ENCODE measurements at regions of chr2 and their contacts with region 1.

Region 1: GRCh38 chr2:9613291-9613690 is 17.5 kb downstream of the YWHAQ start:
- DNase-seq: no peak
- ATAC-seq: no peak
- H3K4me3 Mint-ChIP-seq: no peak overlapping the region
- H3K27ac Mint-ChIP-seq: no peak overlapping the region
- H3K4me1 Mint-ChIP-seq: peaks cover 86% of the 10 kb centered on the region
- H3K27me3 Mint-ChIP-seq: no peaks in the 10 kb centered on the region

Region 2: DNA sequence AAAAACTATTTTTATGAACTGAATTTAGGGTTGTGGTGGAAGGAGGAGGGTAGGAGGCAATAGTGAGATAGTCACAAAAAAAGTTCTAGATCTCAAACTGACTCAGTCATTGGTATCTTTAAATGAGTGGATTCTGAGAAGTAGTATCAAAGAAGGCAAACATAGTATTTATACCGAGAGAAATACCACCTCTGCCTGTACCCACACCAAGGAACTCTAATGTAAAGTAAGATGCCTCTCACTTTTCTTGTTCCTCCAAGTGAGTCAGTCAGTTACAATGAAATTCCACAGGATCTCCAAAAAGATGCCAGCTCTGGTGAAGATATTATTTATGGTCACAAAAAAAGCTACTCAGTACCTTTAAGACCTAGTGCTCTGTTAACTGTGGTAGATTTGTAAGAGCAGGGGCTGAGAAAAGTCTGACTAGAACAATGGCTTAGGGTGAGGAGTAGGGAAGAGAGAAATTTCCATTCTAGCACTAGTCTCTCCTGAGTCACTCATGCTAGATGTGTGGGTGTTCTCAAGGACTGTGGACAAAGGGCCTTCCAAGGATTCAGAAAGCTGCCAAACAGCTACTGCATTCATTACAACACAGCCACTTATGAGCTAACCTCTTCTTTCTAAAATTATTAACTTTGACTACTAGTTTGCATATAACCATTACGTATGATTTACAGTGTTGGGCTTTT is 18.8 kb before region 1 on chr2:
- CTCF ChIA-PET with region 1: interaction called, 10 read pairs
- DNase-seq: no peak
- ATAC-seq: peak; percentile 73
- H3K4me3 Mint-ChIP-seq: peak overlapping the region; percentile 29
- H3K27ac Mint-ChIP-seq: peak overlapping the region; percentile 82
- H3K4me1 Mint-ChIP-seq: peaks cover 61% of the 10 kb centered on the region
- H3K27me3 Mint-ChIP-seq: no peaks in the 10 kb centered on the region